Activated T-helper 1 cell treated with anti-CD3 and anti-CD28 coated beads, Interleukin-12 subunit alpha, Interleukin-12 subunit beta, Interleukin-2, Interleukin-4 antibody, amounts not matched to agents 30 ng/mL and 10 ng/mL and 1 ng/mL, durations not matched to agents 14 hours and 24 hours and 36 hours (primary cell): ENCODE measurements at regions of chr13 and their contacts with region 1.

Region 1: GRCh38 chr13:59391696-59392095 is 772.0 kb downstream of the DIAPH3 start:
- DNase-seq: peak; percentile 49
- H3K4me3 Mint-ChIP-seq: no peak overlapping the region
- H3K27ac Mint-ChIP-seq: no peak overlapping the region
- H3K4me1 Mint-ChIP-seq: no peaks in the 10 kb centered on the region
- H3K27me3 Mint-ChIP-seq: peaks cover 6% of the 10 kb centered on the region

Region 2: DNA sequence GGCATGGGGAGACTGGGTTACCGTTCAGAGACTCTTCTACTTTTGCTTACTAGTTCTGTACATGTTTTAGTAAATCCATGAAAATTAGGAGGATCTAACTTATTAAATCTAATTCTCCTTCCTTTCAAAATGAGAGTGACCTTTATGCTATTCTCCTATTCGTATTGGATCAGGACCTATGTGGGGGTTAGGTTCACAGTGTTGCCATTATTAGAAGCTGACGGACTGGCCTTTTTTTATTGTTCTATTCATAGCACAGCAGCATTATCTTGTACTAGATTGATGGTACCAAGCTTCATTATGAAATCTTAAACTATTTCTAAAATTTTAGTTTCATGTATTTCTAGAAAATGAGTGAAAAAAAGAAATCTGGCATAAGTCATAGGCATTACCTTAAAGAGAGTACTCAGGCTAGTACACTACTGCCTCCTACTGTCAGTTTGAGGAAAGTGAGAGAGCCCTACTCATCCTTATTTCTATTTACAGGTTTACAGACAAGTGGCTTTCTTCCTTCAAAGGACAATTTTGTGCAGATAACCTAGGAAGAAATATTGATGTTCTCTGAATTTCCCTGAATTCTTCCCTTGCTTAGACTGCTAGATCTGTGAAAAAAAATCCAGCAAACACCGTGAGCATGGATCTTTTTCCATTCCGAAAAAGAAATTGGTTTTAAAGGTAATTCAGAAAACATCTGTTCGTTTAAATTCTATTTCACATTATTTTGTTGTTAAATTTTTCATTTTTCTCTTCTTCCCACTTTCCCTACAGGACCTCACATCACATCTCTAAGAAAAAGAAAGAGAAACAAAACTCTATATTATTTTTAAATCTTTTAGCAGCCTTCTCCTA is 286.5 kb after region 1 on chr13:
- intact Hi-C with region 1: loop called (anchors 1 kb)
- DNase-seq: no peak
- H3K4me3 Mint-ChIP-seq: no peak overlapping the region
- H3K27ac Mint-ChIP-seq: no peak overlapping the region
- H3K4me1 Mint-ChIP-seq: no peaks in the 10 kb centered on the region
- H3K27me3 Mint-ChIP-seq: no peaks in the 10 kb centered on the region

Region 3: GRCh38 chr13:59906413-59907049 is 514.8 kb after region 1 on chr13:
- intact Hi-C with region 1: loop called (anchors 5 kb)
- DNase-seq: no peak
- H3K4me3 Mint-ChIP-seq: no peak overlapping the region
- H3K27ac Mint-ChIP-seq: no peak overlapping the region
- H3K4me1 Mint-ChIP-seq: peaks cover under 1% of the 10 kb centered on the region
- H3K27me3 Mint-ChIP-seq: no peaks in the 10 kb centered on the region

Region 4: GRCh38 chr13:60163478-60164233 is 772.0 kb after region 1 on chr13 and contains the start of gene DIAPH3:
- intact Hi-C with region 1: loop called (anchors 5 kb)
- DNase-seq: peak; percentile 93
- H3K4me3 Mint-ChIP-seq: peak within 1 kb of the TSS; percentile 93
- H3K27ac Mint-ChIP-seq: peak within 1 kb of the TSS; percentile 94
- H3K4me1 Mint-ChIP-seq: peaks cover 38% of the 10 kb centered on the region
- H3K27me3 Mint-ChIP-seq: no peaks in the 10 kb centered on the region
- total RNA-seq, gene DIAPH3: 22.8 and 24.6 TPM in 2 replicates

Region 5: DNA sequence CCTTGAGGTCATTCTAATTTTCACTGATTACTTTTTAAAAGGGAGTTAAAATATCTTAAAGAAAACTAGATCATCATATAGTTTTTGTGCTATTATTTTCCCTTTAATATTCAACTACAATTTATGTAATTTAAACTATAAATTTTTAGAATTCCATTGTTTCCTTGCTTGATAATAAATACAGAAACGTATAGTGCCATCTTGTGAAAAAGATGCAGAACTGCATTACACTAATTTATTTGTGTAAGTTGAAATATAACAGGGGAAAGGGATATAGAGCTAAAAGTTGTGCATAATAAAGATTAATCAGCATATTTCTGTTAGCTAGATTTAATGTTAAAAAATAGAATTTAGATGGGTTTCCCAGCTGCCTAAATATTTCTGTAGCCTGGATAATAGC is 943.8 kb after region 1 on chr13:
- intact Hi-C with region 1: loop called (anchors 2 kb)
- DNase-seq: no peak
- H3K4me3 Mint-ChIP-seq: no peak overlapping the region
- H3K27ac Mint-ChIP-seq: no peak overlapping the region
- H3K4me1 Mint-ChIP-seq: no peaks in the 10 kb centered on the region
- H3K27me3 Mint-ChIP-seq: peaks cover 17% of the 10 kb centered on the region